HEK293 (cell line): ENCODE measurements at regions of chr10 and their contacts with region 1.

Region 1: DNA sequence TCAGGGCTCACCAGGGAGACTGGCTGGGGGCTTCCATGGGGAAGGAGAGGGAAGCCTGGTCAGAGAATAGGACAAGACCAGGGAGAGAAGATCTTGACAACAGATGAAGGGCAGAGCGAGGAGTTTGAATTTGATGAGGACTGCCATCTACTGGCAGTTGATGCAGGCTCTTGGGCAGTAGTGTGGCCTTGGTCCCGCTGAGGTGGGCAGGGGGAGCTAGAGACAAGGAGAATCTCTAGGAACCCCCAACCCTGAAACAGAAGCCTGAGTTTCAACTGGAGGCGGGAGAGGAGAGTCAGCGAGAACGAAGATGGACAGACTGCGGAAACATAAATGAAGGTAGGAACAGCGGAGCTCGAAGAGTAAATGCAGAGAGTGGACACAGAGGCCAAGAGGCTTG is 81.0 kb downstream of the PPP1R3C start:
- H3K4me3 ChIP-seq: no peak overlapping the region
- H3K27ac ChIP-seq: no peak overlapping the region
- H3K4me1 ChIP-seq: no peaks in the 10 kb centered on the region
- CTCF ChIP-seq: peak; percentile 92

Region 2: DNA sequence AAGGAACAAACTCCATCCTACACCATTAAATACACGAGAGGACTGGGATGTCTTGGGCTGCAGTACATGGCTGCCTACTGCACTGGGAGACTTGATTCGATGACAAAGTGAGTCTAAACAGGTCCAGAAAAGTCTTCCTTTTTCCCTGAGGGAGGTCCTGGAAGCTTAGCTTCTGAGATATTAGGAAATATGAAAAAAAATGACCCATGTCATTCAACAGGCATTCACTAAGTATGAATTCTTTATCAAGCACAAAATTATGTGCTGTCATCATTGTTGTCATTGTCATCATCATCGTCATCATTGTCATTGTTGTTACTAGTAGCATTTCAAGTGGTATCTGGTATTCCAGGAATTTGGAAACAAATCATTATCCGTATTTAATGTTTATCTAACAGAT is 191.5 kb before region 1 on chr10:
- CTCF ChIA-PET with region 1: no interaction called
- POLR2A ChIA-PET with region 1: no interaction called
- H3K4me3 ChIP-seq: no peak overlapping the region
- H3K27ac ChIP-seq: no peak overlapping the region
- H3K4me1 ChIP-seq: no peaks in the 10 kb centered on the region
- CTCF ChIP-seq: no peak

Region 3: GRCh38 chr10:91627344-91628102 is 75.7 kb after region 1 on chr10:
- CTCF ChIA-PET with region 1: interaction called, 11 read pairs
- POLR2A ChIA-PET with region 1: no interaction called
- H3K4me3 ChIP-seq: no peak overlapping the region
- H3K27ac ChIP-seq: no peak overlapping the region
- H3K4me1 ChIP-seq: no peaks in the 10 kb centered on the region
- CTCF ChIP-seq: no peak